ENCODE measurements at regions of chr1 and their contacts with region 1.

Region 1: GRCh38 chr1:175146529-175147213 is 45.9 kb downstream of the KIAA0040 start:
- H3K4me3 ChIP-seq: no peak overlapping the region
- H3K27ac ChIP-seq: no peak overlapping the region
- H3K4me1 ChIP-seq: no peaks in the 10 kb centered on the region
- CTCF ChIP-seq: peak; percentile 85

Region 2: DNA sequence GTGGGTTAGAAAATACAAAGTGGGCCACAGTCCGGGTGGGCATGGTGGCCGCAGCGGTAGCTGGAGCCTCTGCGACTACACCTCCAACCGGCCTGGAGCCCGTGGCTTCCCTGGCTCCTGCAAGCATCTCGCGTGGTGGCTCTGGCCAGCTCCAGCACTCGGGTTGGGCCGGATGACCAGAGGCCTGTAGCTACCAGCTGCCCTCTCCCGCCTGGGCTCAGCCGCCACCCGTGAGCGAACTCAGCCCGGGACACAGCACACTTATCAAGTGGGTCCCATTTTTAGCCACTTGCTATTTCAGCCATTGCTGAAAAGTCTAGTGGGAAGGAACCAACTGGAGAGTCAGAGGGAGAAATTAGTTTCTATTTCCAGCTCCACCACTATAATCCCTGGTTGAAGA is 254.7 kb before region 1 on chr1:
- CTCF ChIA-PET with region 1: no interaction called
- POLR2A ChIA-PET with region 1: no interaction called
- H3K4me3 ChIP-seq: no peak overlapping the region
- H3K27ac ChIP-seq: no peak overlapping the region
- H3K4me1 ChIP-seq: no peaks in the 10 kb centered on the region
- CTCF ChIP-seq: no peak

Region 3: DNA sequence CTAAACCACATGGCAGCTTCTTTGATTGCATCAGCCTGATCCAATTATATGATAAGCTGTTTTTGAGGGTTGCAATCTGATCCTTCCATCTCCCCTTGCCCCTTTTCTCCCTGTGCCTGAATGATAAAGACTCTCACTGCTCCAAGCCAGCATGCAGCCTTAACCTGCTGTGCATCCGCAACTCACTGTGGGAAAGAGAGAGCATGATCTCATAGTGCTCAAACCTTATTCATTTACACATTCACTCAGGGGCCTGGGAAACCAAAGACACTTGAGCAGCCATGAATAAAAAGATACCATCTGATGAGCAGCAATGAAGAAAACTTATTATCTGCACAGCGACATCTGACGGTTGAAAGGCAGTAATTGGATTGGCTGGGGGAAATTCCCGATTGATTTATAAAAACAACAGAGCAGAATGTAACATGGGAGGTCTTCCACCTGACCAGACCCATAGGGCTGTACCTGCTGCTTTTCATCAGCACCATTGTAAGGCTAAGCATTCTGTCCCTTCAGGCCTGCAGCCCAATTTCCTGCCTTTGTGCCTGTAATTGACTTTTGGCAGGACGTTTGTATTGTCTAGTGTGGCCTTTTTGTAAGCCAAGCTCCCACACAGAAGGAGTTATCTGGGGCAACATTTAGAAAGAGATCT is 16.5 kb before region 1 on chr1:
- CTCF ChIA-PET with region 1: interaction called, 43 read pairs
- POLR2A ChIA-PET with region 1: no interaction called
- H3K4me3 ChIP-seq: no peak overlapping the region
- H3K27ac ChIP-seq: no peak overlapping the region
- H3K4me1 ChIP-seq: no peaks in the 10 kb centered on the region
- CTCF ChIP-seq: no peak

Region 4: DNA sequence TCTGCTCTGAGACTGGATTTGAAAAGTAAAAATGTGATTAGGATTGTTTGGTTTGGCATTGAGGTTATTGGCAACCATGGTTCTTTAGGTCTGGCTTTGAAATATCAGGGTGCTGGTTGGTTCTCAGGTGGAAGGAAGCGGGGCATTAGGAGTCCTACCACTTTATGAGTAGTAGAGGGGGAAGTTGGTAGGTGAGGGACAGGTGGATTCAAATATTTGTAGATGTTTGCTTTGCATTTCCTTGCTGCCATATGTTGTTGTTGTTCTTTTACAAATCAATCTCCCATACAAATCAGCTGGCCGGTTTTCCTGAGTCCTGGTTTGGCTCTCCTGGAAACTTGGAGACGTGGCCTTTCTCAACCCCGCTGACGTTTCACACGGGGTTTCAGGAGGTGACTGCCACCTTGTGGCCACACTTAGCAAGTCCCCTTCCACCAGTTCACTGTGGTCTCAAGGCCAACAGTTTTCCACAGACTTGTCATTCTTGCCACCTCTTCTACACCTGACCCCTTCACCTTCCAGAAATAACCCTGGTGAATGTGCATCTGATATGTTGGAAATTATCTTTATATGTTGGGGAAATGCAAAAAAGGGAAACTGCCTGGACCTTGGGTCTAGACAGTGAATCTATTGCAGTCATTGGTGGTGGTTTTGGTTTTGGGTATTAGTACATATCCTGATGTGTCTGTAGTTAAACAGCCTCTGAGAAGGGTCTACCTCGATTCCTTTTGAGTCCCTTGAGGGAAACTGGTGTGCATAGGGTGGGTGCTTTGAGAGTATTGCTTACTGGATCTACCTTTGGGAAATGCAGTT is 173.0 kb after region 1 on chr1:
- CTCF ChIA-PET with region 1: interaction called, 156 read pairs
- POLR2A ChIA-PET with region 1: no interaction called
- H3K4me3 ChIP-seq: no peak overlapping the region
- H3K27ac ChIP-seq: no peak overlapping the region
- H3K4me1 ChIP-seq: no peaks in the 10 kb centered on the region
- CTCF ChIP-seq: peak; percentile 55; the same call in 1 of the 2 replicates